Transverse colon (tissue), 4 donors: ENCODE measurements at regions of chr17 and their contacts with region 1.

Region 1: DNA sequence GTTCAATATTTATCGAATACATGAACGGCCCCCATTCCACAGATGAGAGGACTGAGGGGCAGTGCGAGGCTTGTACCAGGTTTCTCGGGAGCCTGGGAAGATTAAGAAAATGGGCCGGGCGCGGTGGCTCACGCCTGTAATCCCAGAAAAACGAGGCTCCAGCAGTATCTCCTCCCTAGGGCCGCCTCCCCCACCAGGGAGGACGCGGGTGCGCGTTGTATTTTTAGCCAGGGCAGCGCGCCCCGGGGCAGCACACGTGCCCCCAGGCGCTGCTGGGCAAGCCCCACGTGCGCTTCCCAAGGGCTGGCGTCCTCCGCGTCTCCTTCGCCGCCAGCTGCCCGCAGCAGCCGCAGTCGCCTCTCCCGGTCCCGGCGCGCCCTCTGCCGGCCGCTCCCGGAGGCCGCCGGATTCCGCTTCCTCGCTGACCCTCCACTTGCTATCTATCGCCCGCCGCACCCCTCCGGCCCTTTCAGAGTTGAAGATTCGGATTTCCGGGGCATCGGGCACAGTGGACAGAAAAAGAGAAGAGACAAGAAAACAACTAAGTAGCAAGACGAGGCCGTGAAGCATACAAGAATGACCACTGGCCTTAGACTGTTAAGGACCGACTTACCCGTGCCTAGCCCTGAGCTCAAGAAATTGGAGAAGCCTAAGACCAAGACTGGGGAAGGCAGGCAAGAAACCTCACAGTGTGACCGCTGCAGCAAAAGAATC is 1.9 kb upstream of the YBX2 start:
- DNase-seq: peak; percentile 88
- H3K4me3 ChIP-seq: peak overlapping the region in 1 of 4 donors; percentile 26
- H3K27ac ChIP-seq: peak overlapping the region; percentile 64 to 91 (median 89)
- H3K4me1 ChIP-seq: peaks cover 22 to 49% (median 47%) of the 10 kb centered on the region in 4 donors
- H3K27me3 ChIP-seq: peaks cover 25% of the 10 kb centered on the region
- CTCF ChIP-seq: peak; percentile 91 to 98 (median 95)
- EP300 ChIP-seq: peak; percentile 40
- POLR2A ChIP-seq: no peak

Region 2: GRCh38 chr17:7280519-7281429 is 15.6 kb before region 1 on chr17:
- in situ Hi-C with region 1: no loop called
- intact Hi-C with region 1: loop called (anchors 2 kb)
- DNase-seq: peak; percentile 91
- H3K4me3 ChIP-seq: peak overlapping the region; percentile 2 to 71 (median 48)
- H3K27ac ChIP-seq: peak overlapping the region; percentile 84 to 89 (median 86)
- H3K4me1 ChIP-seq: peaks cover 12 to 42% (median 33%) of the 10 kb centered on the region in 4 donors
- H3K27me3 ChIP-seq: no peaks in the 10 kb centered on the region
- CTCF ChIP-seq: peak; percentile 86 to 99 (median 96)
- EP300 ChIP-seq: peak; percentile 1
- POLR2A ChIP-seq: peak; percentile 17

Region 3: DNA sequence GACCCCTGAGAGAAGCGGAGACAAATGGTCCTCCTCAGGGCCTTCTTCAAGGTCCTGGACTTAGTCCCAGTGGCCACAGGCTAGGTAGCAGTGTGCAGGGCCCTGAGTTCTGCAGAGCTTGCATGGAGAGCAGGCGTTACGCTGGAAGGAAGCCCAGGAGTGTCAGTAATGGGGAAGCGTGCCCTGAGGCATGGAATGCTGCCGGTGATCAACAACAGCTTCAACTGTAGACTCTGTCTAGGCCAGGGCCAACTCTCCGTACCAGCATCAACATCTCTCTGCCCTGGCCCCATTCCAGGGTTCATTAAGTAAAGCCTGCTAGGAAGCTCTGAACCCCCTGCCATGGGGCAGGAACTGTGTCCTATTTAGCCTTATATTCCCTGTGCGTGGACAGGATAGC is 84.0 kb after region 1 on chr17:
- in situ Hi-C with region 1: no loop called
- intact Hi-C with region 1: no loop called
- DNase-seq: peak; percentile 68
- H3K4me3 ChIP-seq: peak overlapping the region in 3 of 4 donors; percentile 53 to 66 (median 53)
- H3K27ac ChIP-seq: peak overlapping the region; percentile 74 to 85 (median 81)
- H3K4me1 ChIP-seq: peaks cover 6 to 22% (median 22%) of the 10 kb centered on the region in 4 donors
- H3K27me3 ChIP-seq: no peaks in the 10 kb centered on the region
- CTCF ChIP-seq: no peak
- EP300 ChIP-seq: no peak
- POLR2A ChIP-seq: no peak

Region 4: DNA sequence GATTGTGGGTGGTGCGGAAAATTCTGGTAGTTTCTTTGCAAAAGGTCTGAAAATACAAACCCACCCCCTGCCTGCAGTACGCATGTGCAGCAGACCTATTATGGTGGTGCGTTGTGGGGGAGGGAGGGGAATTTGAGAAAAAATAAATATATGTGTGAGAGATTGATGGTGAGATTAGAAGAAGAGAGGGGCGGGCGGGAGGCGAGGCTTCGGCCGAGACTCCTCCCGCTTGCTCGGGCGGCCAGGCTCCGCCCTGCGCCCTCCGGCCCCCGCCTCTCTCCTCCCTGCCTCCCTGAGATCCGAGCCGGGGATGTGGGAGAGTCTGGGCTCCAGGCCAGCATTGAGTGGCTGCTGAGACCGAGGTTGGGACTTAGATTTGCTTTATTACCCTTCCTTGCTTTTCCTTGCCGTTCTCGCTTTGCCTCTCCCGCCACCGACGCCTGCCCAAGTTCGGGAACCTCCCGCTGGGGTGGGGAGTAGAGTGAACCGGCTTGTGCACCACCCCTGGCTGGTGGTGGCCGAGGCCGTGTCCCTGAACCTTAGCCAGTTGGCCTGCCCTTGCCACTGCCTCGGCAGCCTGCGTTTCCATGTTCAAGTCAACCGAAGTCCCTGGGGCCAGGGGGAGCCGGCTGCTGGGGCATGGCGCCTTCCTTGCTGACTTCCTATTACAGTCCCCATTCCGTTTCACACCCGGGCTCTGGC is 591.3 kb after region 1 on chr17:
- in situ Hi-C with region 1: no loop called
- intact Hi-C with region 1: no loop called
- DNase-seq: peak; percentile 94
- H3K4me3 ChIP-seq: peak overlapping the region; percentile 9 to 85 (median 80)
- H3K27ac ChIP-seq: peak overlapping the region; percentile 93 to 99 (median 96)
- H3K4me1 ChIP-seq: peaks cover 39 to 61% (median 54%) of the 10 kb centered on the region in 4 donors
- H3K27me3 ChIP-seq: no peaks in the 10 kb centered on the region
- CTCF ChIP-seq: no peak
- EP300 ChIP-seq: no peak
- POLR2A ChIP-seq: peak; percentile 55